HepG2 (cell line): ENCODE measurements at regions of chr3 and their contacts with region 1.

Region 1: DNA sequence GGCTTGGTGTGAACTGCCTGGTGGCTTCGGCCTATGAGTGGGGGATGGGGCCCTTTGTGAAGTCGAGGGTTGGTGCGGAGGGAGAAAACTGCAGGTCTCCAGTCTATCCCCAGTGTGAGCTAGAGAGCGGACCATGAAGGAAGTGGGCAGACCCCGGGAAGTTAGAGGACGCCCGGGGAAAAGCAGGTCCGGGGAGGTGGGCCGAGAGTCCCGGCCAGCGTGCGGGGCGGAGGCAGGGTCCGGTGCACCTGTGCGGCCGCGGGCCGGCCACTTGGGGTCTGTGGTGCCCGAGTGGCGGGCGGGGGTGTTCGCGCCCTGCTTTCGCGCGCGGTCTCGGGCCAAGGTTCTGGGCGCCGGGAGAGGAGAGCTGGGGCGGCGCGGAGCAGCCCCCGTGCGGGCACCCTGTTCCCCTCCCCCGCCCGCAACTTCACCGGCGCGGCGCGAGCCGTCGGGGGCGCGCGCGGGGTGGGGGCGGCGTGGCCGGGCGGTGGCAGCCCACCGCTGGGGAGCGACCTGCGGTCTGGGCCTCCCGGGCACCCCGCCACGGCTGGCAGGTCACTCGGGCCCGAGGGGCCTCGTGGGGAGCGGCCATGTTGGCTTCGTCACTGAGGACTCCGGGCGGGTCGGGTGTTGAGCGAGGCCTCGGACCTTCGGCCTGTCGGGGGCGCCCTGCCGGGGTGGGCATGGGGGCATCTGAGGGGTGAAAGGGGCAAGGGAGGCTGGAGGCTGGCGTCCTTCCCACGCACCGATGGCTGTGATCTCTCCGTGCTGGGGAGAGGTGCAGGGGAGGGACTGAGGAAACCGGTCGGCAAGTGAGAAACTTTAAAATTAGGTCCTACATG is 4.8 kb downstream of the UBE2E1 start:
- DNase-seq: peak; percentile 41
- ATAC-seq: peak; percentile 79
- H3K4me3 ChIP-seq: peak overlapping the region; percentile 75 to 90 (median 79)
- H3K27ac ChIP-seq: peak overlapping the region; percentile 85
- H3K4me1 ChIP-seq: peaks cover 55% of the 10 kb centered on the region
- H3K27me3 ChIP-seq: no peaks in the 10 kb centered on the region; a peak in 1 of 5 replicates
- CTCF ChIP-seq: peak; percentile 70
- EP300 ChIP-seq: no peak
- POLR2A ChIP-seq: peak; percentile 56 to 66
- RAD21 ChIP-seq: no peak

Region 2: GRCh38 chr3:23945903-23946751 is 135.6 kb after region 1 on chr3:
- CTCF ChIA-PET with region 1: no interaction called
- POLR2A ChIA-PET with region 1: no interaction called
- in situ Hi-C with region 1: no loop called
- intact Hi-C with region 1: loop called (anchors 2 kb)
- DNase-seq: peak; percentile 89
- ATAC-seq: peak; percentile 88
- H3K4me3 ChIP-seq: peak overlapping the region; percentile 61 to 90 (median 75)
- H3K27ac ChIP-seq: peak overlapping the region; percentile 94
- H3K4me1 ChIP-seq: peaks cover 55% of the 10 kb centered on the region
- H3K27me3 ChIP-seq: peaks cover 0 to 5% of the 10 kb centered on the region in 2 experiments; a peak in 1 of 5 replicates
- CTCF ChIP-seq: no peak
- EP300 ChIP-seq: no peak; a peak in 1 of 4 replicates
- POLR2A ChIP-seq: peak; percentile 71 to 80
- RAD21 ChIP-seq: no peak; the same call in 1 of the 2 replicates

Region 3: DNA sequence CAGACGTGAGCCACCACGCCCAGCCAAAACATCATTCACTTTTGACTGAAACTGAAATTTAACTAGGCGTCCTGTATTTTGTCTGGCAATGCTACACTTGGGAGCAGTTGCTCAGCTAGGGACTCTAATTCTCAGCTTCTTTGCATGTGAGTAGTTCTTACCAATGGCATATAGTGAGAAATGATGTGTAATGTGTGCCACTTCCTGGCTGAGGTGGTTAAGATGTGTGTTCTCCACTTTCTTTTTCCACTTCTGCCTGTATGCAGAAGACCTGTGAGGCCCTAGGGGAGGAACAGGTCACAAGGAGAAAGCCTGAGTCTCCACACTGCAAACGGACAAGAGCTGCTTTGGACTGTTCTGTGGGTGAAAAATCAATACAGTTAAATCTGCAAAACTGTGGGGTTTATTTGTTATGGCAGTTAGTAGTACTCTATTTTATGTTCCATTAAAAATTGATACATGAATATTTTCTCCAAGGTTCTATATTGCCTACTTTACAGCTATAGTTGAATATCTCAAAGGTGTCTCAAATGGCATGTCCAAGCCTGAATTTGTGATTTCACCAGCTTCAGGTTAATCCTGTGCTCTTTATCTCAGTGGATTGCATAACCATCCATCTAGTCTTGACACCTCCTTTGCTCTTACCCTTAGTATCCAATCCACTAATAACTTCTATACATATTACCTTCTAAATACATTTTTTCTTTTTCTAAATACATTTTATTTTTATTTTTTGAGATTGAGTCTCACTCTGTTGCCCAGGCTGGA is 193.8 kb after region 1 on chr3:
- CTCF ChIA-PET with region 1: no interaction called
- POLR2A ChIA-PET with region 1: no interaction called
- in situ Hi-C with region 1: no loop called
- intact Hi-C with region 1: no loop called
- DNase-seq: no peak
- ATAC-seq: no peak
- H3K4me3 ChIP-seq: no peak overlapping the region
- H3K27ac ChIP-seq: no peak overlapping the region
- H3K4me1 ChIP-seq: no peaks in the 10 kb centered on the region
- H3K27me3 ChIP-seq: peaks cover 0 to 10% of the 10 kb centered on the region in 2 experiments; a peak in 2 of 5 replicates
- CTCF ChIP-seq: no peak
- EP300 ChIP-seq: no peak
- POLR2A ChIP-seq: no peak
- RAD21 ChIP-seq: no peak